ENCODE measurements at regions of chr11 and their contacts with region 1.

Region 1: GRCh38 chr11:63478896-63479295 is 12.1 kb downstream of the PLAAT5 start:
- DNase-seq: peak; percentile 68
- ATAC-seq: peak; percentile 97
- H3K4me3 ChIP-seq: no peak overlapping the region
- H3K27ac ChIP-seq: no peak overlapping the region
- H3K4me1 ChIP-seq: peaks cover 0 to 6% of the 10 kb centered on the region in 2 experiments; a peak in 2 of 4 replicates
- H3K27me3 ChIP-seq: no peaks in the 10 kb centered on the region
- CTCF ChIP-seq: peak; percentile 85 to 94 (median 88)
- POLR2A ChIP-seq: no peak
- RAD21 ChIP-seq: peak; percentile 98

Region 2: DNA sequence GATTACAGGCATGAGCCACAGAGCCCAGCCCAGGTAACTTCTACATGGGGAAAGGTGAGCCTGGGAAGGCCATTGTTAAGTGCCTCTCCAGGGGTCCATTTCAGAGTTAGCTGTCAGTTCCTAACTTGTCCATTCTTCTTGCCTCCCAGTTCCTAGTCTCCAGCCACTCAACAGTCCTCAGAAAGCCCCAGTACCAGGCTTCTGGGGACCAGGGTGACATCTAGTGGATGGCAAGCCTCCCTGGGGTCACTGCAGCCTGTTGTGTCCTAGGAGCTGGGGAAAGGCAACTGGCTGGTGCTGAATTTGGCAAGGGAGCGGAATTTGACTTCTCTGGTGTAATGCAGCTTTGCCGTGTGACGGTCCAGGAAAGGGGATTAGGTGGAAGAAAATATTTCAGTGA is 29.1 kb after region 1 on chr11:
- CTCF ChIA-PET with region 1: interaction called, 16 read pairs
- POLR2A ChIA-PET with region 1: no interaction called
- RAD21 ChIA-PET with region 1: interaction called in 1 of 2 experiments, 3 read pairs
- intact Hi-C with region 1: no loop called
- DNase-seq: peak; percentile 28
- ATAC-seq: peak; percentile 98
- H3K4me3 ChIP-seq: no peak overlapping the region
- H3K27ac ChIP-seq: no peak overlapping the region
- H3K4me1 ChIP-seq: no peaks in the 10 kb centered on the region
- H3K27me3 ChIP-seq: no peaks in the 10 kb centered on the region
- CTCF ChIP-seq: peak; percentile 46 to 68 (median 56); a peak in 5 of 6 replicates
- POLR2A ChIP-seq: no peak
- RAD21 ChIP-seq: peak; percentile 66

Region 3: GRCh38 chr11:63635762-63636465 is 157.0 kb after region 1 on chr11:
- CTCF ChIA-PET with region 1: interaction called, 40 read pairs
- POLR2A ChIA-PET with region 1: interaction called, 4 read pairs
- RAD21 ChIA-PET with region 1: interaction called, 5 to 7 read pairs
- intact Hi-C with region 1: loop called (anchors 1 kb)
- DNase-seq: peak; percentile 28
- ATAC-seq: peak; percentile 88
- H3K4me3 ChIP-seq: no peak overlapping the region
- H3K27ac ChIP-seq: no peak overlapping the region
- H3K4me1 ChIP-seq: no peaks in the 10 kb centered on the region
- H3K27me3 ChIP-seq: no peaks in the 10 kb centered on the region
- CTCF ChIP-seq: peak; percentile 68 to 87 (median 75); a peak in 5 of 6 replicates
- POLR2A ChIP-seq: no peak
- RAD21 ChIP-seq: peak; percentile 86

Region 4: DNA sequence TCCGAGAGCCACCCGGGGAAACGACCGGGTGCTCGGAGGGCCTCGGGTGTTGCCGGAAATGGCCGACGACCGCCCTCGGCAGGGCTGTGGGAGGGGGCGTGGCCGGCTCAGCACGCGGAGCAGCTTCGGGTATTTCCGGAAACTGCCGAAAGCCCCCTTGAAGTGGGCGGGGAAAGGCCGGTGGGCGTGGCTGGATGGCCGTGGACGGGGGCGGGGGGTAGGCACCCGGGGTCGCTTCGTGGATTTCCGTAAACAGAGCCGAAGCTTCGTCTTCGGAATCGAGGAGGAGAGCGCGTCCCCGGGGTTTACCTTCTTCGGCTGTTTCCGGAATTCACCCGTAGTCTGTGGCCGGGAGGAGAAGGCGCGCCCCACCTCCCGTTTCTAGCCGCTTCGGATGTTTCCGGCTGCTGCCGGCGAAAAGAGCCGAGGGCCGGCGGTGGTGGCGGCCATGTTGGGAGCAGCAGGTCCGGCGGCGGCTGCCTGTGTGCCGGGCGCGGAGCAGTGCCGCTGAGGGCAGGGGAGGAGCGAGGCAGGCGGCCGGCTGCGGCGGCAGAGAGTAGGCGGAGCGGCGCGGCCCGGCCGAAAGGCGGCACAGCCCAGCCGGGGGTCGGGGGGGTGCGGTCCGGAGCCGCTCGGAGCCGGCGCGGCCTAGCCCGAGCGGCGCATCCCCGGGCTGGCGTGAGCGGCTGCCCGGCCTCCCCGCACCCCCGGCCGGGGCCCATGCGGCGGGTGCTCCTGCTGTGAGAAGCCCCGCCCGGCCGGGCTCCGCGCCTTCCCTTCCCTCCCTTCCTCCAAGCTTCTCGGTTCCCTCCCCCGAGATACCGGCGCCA is 360.0 kb after region 1 on chr11 and contains the start of gene MARK2:
- CTCF ChIA-PET with region 1: no interaction called
- POLR2A ChIA-PET with region 1: no interaction called
- RAD21 ChIA-PET with region 1: no interaction called
- intact Hi-C with region 1: loop called (anchors 10 kb)
- DNase-seq: peak; percentile 97
- ATAC-seq: peak; percentile 90
- H3K4me3 ChIP-seq: peak within 1 kb of the TSS; percentile 96 to 98
- H3K27ac ChIP-seq: peak within 1 kb of the TSS; percentile 79
- H3K4me1 ChIP-seq: peaks cover 30 to 55% of the 10 kb centered on the region in 2 experiments
- H3K27me3 ChIP-seq: no peaks in the 10 kb centered on the region
- CTCF ChIP-seq: no peak
- POLR2A ChIP-seq: peak; percentile 18
- RAD21 ChIP-seq: no peak
- total RNA-seq, gene MARK2: 39.8 TPM